CD8-positive, alpha-beta T cell (primary cell): ENCODE measurements at regions of chr2 and their contacts with region 1.

Region 1: GRCh38 chr2:68282811-68283418 is 30.6 kb upstream of the PPP3R1 start:
- DNase-seq: peak in 4 of 9 experiments; percentile 9 to 70 (median 40)
- ATAC-seq: peak; percentile 71
- H3K4me3 ChIP-seq: no peak overlapping the region
- H3K4me3 Mint-ChIP-seq: no peak overlapping the region
- H3K27ac ChIP-seq: no peak overlapping the region
- H3K27ac Mint-ChIP-seq: no peak overlapping the region
- H3K4me1 ChIP-seq: no peaks in the 10 kb centered on the region
- H3K4me1 Mint-ChIP-seq: no peaks in the 10 kb centered on the region
- H3K27me3 ChIP-seq: peaks cover 0 to 5% of the 10 kb centered on the region in 2 experiments
- H3K27me3 Mint-ChIP-seq: peaks cover 11% of the 10 kb centered on the region
- CTCF ChIP-seq: peak; percentile 80

Region 2: DNA sequence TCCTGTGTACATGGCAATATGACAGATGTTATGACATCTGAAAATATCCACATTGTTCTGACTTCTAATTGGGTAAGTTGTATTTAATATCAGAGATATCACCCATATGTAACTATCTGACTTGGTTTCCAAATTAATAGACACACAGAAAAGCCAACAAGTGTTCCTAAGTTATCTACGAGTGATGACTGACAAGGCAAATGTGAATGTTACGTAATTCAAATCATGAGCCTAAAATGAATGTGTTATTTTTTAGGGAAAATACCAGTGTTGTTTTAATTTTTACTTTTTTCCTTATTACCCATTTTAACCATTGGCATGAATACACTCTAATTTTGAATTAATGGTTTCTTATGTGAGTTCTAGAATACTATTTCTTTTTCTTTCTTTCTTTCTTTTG is 141.0 kb before region 1 on chr2:
- CTCF ChIA-PET with region 1: interaction called, 10 read pairs
- POLR2A ChIA-PET with region 1: no interaction called
- intact Hi-C with region 1: no loop called
- DNase-seq: no peak
- ATAC-seq: no peak
- H3K4me3 ChIP-seq: no peak overlapping the region
- H3K4me3 Mint-ChIP-seq: no peak overlapping the region
- H3K27ac ChIP-seq: no peak overlapping the region
- H3K27ac Mint-ChIP-seq: no peak overlapping the region
- H3K4me1 ChIP-seq: no peaks in the 10 kb centered on the region
- H3K4me1 Mint-ChIP-seq: peaks cover 1% of the 10 kb centered on the region
- H3K27me3 ChIP-seq: no peaks in the 10 kb centered on the region
- H3K27me3 Mint-ChIP-seq: no peaks in the 10 kb centered on the region
- CTCF ChIP-seq: no peak

Region 3: GRCh38 chr2:68196120-68196716 is 86.7 kb before region 1 on chr2:
- CTCF ChIA-PET with region 1: interaction called, 26 read pairs
- POLR2A ChIA-PET with region 1: no interaction called
- intact Hi-C with region 1: loop called (anchors 1 to 2 kb)
- DNase-seq: peak in 6 of 9 experiments; percentile 14 to 76 (median 38)
- ATAC-seq: peak; percentile 20
- H3K4me3 ChIP-seq: no peak overlapping the region
- H3K4me3 Mint-ChIP-seq: no peak overlapping the region
- H3K27ac ChIP-seq: no peak overlapping the region
- H3K27ac Mint-ChIP-seq: peak overlapping the region; percentile 62
- H3K4me1 ChIP-seq: peaks cover 8% of the 10 kb centered on the region
- H3K4me1 Mint-ChIP-seq: peaks cover 61% of the 10 kb centered on the region
- H3K27me3 ChIP-seq: no peaks in the 10 kb centered on the region
- H3K27me3 Mint-ChIP-seq: no peaks in the 10 kb centered on the region
- CTCF ChIP-seq: peak; percentile 54

Region 4: GRCh38 chr2:68295516-68295915 is 12.6 kb after region 1 on chr2:
- CTCF ChIA-PET with region 1: interaction called, 17 read pairs
- POLR2A ChIA-PET with region 1: no interaction called
- intact Hi-C with region 1: no loop called
- DNase-seq: peak in 1 of 9 experiments; percentile 7
- ATAC-seq: no peak
- H3K4me3 ChIP-seq: no peak overlapping the region
- H3K4me3 Mint-ChIP-seq: no peak overlapping the region
- H3K27ac ChIP-seq: no peak overlapping the region
- H3K27ac Mint-ChIP-seq: no peak overlapping the region
- H3K4me1 ChIP-seq: no peaks in the 10 kb centered on the region
- H3K4me1 Mint-ChIP-seq: no peaks in the 10 kb centered on the region
- H3K27me3 ChIP-seq: no peaks in the 10 kb centered on the region
- H3K27me3 Mint-ChIP-seq: peaks cover 6% of the 10 kb centered on the region
- CTCF ChIP-seq: no peak